Head of caudate nucleus (tissue), 42 donors: ENCODE measurements at regions of chr2 and their contacts with region 1.

Region 1: DNA sequence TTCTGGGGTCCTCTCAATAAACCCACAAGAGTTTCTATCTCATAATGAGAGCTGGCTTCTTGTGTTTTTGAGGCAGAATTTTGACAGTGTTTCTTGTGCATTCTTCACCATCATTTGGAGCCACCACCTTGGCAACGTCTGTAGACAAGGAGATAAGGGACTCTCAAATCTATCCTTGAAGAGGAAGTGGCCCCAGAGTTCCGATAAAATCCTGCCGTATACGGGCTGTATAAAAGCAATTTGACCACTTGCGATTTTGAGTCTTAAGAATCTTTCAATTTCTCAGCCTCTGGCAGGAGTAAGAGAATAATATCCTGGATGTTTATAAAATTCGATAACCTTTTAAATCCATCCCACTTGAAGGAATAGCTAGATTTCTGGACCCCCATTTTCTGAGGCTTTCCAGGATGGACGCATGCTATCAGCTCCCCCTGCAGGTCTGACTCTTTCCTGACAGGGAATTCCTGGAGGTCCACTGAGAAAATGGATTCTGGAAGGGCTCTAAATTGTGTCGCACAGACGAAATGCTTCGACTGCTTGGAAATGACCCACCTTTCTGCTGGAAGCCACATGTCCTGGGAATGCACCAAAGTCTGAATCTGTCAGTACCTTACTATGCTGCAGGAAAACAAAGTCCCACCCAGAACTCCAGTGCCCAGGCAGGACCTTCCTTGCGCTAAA is 54.1 kb downstream of the E2F6 start:
- DNase-seq: peak in 37 of 42 donors; percentile 20 to 83 (median 60)

Region 2: DNA sequence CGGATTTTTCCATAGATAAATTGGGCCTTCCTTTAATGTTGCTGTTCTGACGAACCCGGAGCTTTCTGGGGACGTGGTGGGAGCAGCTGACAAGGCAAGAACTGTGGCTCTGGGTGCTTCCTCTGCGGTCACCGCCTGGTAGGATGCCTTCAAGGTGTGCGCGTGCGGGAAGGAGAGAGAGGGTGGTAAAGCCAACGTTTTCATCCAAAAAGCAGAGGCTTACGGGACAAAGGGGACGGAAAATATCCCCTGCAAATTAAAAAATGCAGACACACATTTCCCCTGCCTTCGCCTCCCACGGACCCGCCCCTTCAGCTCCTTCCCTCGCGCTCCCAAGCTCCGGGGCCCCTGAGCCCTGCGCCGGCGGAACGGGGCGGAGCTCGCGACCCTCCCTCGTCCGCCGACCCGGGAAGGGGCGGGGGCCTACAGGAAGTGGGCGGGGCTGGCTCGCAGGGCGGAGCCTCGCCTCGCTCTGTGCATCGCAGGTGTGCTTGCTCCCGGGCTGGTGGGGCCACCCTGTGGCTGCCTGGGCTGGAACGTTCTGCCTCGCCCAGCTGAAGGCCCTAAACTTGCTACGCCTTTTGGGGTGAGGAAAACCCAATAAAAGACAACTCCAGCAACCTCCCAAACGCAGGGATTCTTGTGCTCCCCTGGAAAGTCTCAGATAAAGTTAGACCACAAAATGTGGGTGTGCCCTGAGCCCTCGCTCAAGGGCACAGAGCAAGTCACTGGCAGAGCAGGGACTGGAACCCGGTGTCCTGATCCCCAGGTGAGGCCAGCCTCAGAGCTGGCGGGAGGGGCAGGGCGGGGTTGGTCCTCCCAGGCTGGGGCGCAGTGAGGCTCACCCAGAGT is 282.1 kb before region 1 on chr2:
- intact Hi-C with region 1: loop called (anchors 5 kb)
- DNase-seq: peak in 40 of 42 donors; percentile 41 to 87 (median 71)

Region 3: GRCh38 chr2:11234309-11234708 is 177.6 kb before region 1 on chr2:
- intact Hi-C with region 1: loop called (anchors 5 kb)
- DNase-seq: no peak

Region 4: DNA sequence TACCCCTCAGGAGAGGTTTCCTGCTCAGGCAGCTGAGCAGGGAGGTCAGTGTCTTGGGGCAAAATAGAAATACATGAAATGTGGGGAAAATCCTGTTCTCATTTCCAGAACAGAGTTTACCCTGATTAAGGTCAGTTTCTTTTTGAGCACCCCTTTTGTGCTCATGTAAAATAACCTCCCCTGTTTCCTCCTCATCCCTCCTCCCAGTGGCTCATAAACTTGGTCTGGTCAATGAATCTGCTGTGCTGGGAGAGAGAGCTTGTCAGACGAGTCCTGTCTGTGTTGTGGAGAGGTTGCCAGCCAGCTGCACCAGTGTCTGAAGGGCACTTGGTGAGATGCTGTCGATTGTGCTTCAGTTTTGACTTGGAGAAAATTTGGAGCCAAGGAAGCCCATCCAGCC is 209.5 kb after region 1 on chr2:
- intact Hi-C with region 1: no loop called
- DNase-seq: peak in 14 of 42 donors; percentile 17 to 50 (median 32)